AG04449 (cell line): ENCODE measurements at regions of chr11 and their contacts with region 1.

Region 1: GRCh38 chr11:64246871-64247728 is at the start of gene PPP1R14B:
- DNase-seq: no peak
- H3K4me3 ChIP-seq: peak within 1 kb of the TSS; percentile 88
- CTCF ChIP-seq: no peak

Region 2: DNA sequence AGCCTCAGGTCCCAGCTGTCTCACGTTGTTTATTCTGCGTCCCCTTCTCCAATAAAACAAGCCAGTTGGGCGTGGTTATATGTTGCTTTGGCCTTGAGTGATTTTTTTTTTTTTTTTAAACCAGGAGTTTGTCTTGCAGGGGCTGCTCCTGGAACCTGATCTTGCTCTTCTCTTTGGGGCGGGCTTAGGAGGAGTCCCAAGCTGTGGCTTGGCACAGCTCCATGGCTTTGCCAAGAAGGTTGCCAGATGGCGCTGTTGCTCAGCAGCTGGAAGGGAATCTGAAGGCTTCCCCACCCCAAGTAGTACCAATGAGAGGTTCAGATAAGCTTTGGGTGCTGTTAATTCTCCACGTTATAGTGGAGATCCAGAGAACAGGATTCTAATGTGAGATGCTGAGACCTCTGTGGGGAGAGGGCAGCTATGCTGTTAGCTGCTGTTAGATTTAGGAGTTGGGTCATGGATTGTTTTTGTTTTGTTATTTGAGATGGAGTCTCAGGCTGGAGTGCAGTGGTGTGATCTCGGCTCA is 42.6 kb before region 1 on chr11:
- CTCF ChIA-PET with region 1: interaction called, 103 read pairs
- POLR2A ChIA-PET with region 1: interaction called, 7 read pairs
- DNase-seq: peak; percentile 74
- H3K4me3 ChIP-seq: no peak overlapping the region
- CTCF ChIP-seq: peak; percentile 83

Region 3: GRCh38 chr11:64263021-64263946 is 16.2 kb after region 1 on chr11:
- CTCF ChIA-PET with region 1: interaction called, 224 read pairs
- POLR2A ChIA-PET with region 1: interaction called, 61 read pairs
- DNase-seq: no peak
- H3K4me3 ChIP-seq: no peak overlapping the region
- CTCF ChIP-seq: no peak

Region 4: DNA sequence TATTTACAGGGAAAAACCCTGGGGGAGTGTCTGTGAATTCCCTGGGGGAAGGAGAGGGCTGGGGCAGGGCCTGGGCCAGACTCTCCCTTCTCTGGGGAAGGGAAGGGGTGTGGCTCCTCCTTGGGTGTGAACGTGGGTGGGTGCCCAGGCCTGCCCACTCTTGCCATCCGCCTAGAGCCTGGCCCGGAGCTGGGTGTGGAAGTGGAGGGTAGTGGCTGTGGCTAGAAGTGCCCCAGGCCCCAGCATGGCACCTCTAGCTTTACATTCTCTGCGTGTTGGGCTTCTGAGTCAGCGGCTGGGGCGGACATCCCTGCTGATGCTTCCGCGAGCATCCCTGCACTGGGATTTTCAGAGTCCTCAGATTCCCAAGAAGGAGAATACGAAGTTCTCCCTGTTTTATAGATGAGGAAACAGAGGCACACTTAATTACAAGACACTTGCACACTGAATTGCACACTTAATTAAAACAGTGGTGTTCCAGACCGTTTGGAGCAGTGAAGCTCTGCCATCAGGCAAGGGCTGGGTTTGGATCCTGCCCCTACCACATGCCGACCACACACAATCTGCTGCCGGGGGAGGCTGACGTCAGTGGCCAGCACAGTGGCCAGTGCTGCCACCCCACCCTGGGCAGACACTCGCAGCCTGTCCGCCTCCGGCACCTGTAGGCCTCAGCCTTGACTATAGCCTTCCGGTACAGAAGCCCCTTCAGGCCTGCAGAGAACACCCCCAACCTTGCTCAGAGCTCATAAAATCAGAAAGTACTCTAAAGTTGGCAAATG is 29.7 kb after region 1 on chr11:
- CTCF ChIA-PET with region 1: interaction called, 224 read pairs
- POLR2A ChIA-PET with region 1: interaction called, 61 read pairs
- DNase-seq: no peak
- H3K4me3 ChIP-seq: no peak overlapping the region
- CTCF ChIP-seq: no peak

Region 5: GRCh38 chr11:64358907-64359711 is 112.0 kb after region 1 on chr11 and contains the start of gene RPS6KA4:
- CTCF ChIA-PET with region 1: interaction called, 10 read pairs
- POLR2A ChIA-PET with region 1: interaction called, 3 read pairs
- DNase-seq: no peak
- H3K4me3 ChIP-seq: peak within 1 kb of the TSS; percentile 94
- CTCF ChIP-seq: no peak

Region 6: DNA sequence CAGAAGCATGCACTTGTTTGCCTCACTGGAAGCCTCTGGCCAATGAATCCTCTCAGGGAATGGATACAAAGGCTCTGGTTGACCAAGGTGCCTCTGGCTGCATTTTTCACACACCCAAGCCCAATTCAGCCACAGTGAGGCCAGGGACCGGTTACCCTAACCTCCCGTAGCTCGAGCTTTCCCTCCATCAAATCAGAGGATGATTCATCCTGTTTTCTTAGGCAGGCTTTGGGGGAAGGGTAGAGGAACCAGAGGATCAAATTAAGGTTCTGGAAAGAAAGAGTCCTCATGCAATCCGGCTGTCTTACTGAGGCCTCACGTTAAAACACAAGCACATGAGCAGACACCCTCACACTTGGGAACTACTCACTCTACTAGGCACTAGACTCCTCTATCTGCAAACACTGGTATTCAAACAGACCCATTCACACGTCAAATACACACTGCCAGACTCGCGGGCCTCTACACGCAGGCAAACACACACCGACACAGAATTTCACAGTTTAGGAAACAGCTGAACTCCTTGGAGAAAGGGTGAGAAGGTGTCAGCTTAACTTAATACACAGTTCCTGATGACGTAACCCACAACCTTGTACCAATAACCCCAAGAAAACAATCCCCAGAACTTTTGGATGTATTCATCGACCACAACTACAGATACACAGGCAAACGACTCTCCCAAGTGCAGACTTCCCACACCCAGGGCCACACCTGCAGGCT is 463.5 kb after region 1 on chr11:
- CTCF ChIA-PET with region 1: no interaction called
- POLR2A ChIA-PET with region 1: no interaction called
- DNase-seq: no peak
- H3K4me3 ChIP-seq: no peak overlapping the region
- CTCF ChIP-seq: no peak